ENCODE measurements at regions of chr18 and their contacts with region 1.

Region 1: DNA sequence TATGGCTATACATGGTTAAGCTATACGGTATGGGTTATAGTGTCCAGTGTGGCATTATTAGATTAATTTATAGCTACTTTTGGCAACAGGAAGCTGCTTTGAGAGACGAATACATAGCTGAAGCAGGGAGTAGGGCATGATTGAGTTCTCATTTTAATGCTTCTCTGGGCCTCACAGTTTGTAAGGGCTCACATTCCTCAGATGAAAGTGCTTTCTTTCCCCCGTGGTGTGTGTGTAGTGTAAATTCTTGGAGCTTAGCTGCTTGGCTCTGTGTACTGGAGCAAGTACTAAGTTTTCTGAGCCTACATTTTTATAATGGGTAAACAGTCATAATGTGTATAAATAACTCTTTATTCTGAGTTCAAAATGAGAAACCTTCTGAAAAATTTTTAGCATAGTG is 173.7 kb downstream of the PTPRM start:
- DNase-seq: no peak
- ATAC-seq: no peak
- H3K4me3 ChIP-seq: no peak overlapping the region
- H3K27ac ChIP-seq: peak overlapping the region in 1 of 2 donors; percentile 19
- H3K4me1 ChIP-seq: peaks cover under 1 to 2% of the 10 kb centered on the region in 2 donors
- H3K27me3 ChIP-seq: no peaks in the 10 kb centered on the region

Region 2: GRCh38 chr18:7601246-7601615 is 139.6 kb before region 1 on chr18:
- intact Hi-C with region 1: loop called in 1 of 2 experiments (anchors 10 kb)
- DNase-seq: no peak
- ATAC-seq: no peak
- H3K4me3 ChIP-seq: no peak overlapping the region
- H3K27ac ChIP-seq: no peak overlapping the region
- H3K4me1 ChIP-seq: peaks cover 0 to 1% of the 10 kb centered on the region in 2 donors
- H3K27me3 ChIP-seq: no peaks in the 10 kb centered on the region

Measured in aorta (tissue), 5 donors.